Mammary epithelial cell (primary cell): ENCODE measurements at regions of chr6 and their contacts with region 1.

Region 1: GRCh38 chr6:33497157-33497556 is 42.8 kb downstream of the ZBTB9 start:
- DNase-seq: no peak
- H3K4me3 ChIP-seq: no peak overlapping the region
- H3K27ac ChIP-seq: no peak overlapping the region
- H3K4me1 ChIP-seq: no peaks in the 10 kb centered on the region
- H3K27me3 ChIP-seq: no peaks in the 10 kb centered on the region
- CTCF ChIP-seq: no peak

Region 2: DNA sequence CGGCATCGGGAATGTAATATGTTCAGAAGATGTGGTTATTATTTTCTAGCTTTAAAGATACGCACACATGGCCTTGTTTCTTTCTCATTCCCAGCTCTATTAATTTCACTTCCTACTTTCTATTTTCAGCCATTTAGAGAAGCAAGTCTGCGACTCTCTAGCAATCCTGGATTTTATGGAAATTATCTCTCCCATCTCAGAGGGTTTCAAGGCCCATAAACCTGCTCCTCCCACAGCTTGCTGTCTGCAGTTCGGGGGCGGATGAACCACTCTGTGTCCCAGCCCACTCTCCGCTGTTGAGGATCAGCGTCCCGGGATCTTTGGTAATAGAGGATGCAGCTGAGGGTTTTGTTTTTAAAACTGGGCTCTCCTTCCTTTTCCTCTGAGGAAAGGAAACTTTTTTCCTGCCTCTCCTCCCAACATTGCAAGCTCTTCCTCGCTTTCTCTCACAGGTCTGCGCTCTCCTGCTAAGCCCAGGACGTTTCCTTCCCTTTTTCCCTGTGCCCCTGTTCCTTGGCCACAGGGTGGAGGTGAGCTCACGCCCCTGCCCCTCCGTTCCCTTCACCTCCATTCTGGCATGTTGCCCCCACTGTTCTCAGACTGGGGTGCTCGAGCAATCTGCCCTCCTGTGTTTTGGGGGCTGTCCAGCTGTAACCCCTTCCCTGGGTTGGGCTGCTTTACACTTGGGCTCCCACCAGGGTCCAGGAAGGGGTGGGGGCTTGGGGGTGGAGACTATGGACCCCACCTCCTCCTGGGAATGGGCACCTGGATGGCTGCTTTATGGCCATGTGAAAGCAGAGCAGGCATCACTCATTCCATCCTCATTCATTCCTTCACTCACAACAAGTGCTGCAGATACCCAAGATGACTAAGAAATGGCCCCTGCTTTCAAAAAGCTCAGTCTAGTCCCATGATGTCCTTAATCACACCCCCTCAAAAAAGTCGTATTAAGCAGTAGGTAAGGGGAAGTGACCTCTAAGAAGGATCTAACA is 12.1 kb after region 1 on chr6:
- CTCF ChIA-PET with region 1: interaction called, 16 read pairs
- dilution Hi-C with region 1: no loop called
- in situ Hi-C with region 1: no loop called
- intact Hi-C with region 1: no loop called
- DNase-seq: no peak
- H3K4me3 ChIP-seq: no peak overlapping the region
- H3K27ac ChIP-seq: no peak overlapping the region
- H3K4me1 ChIP-seq: no peaks in the 10 kb centered on the region
- H3K27me3 ChIP-seq: no peaks in the 10 kb centered on the region
- CTCF ChIP-seq: no peak

Region 3: DNA sequence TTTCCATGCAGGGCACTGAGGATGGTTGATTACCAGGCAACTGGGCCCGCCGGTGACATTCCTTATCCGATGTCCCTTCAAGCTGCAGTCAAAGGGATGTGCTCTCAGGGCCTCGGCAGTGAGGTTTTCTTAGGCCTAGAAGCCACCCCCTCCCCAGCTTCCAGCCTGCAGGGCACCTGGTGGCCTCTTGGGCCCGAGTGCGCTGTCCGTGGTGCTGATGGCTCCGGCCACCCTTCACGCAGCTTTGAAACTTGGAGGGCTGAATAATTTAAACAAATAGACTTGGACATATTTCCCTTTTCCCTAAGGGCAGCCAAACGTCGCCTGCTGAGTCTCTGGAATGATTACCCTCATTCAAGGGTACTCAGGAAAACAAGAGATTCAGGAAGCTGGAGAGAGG is 315.5 kb after region 1 on chr6:
- CTCF ChIA-PET with region 1: no interaction called
- dilution Hi-C with region 1: no loop called
- in situ Hi-C with region 1: no loop called
- intact Hi-C with region 1: no loop called
- DNase-seq: peak; percentile 23
- H3K4me3 ChIP-seq: no peak overlapping the region
- H3K27ac ChIP-seq: no peak overlapping the region
- H3K4me1 ChIP-seq: no peaks in the 10 kb centered on the region
- H3K27me3 ChIP-seq: peaks cover 4% of the 10 kb centered on the region
- CTCF ChIP-seq: peak; percentile 26 to 53

Region 4: GRCh38 chr6:34273242-34273805 is 776.2 kb after region 1 on chr6:
- CTCF ChIA-PET with region 1: no interaction called
- dilution Hi-C with region 1: no loop called
- in situ Hi-C with region 1: no loop called
- intact Hi-C with region 1: no loop called
- DNase-seq: no peak
- H3K4me3 ChIP-seq: no peak overlapping the region
- H3K27ac ChIP-seq: no peak overlapping the region
- H3K4me1 ChIP-seq: no peaks in the 10 kb centered on the region
- H3K27me3 ChIP-seq: no peaks in the 10 kb centered on the region
- CTCF ChIP-seq: no peak